ENCODE measurements at regions of chr19 and their contacts with region 1.

Region 1: DNA sequence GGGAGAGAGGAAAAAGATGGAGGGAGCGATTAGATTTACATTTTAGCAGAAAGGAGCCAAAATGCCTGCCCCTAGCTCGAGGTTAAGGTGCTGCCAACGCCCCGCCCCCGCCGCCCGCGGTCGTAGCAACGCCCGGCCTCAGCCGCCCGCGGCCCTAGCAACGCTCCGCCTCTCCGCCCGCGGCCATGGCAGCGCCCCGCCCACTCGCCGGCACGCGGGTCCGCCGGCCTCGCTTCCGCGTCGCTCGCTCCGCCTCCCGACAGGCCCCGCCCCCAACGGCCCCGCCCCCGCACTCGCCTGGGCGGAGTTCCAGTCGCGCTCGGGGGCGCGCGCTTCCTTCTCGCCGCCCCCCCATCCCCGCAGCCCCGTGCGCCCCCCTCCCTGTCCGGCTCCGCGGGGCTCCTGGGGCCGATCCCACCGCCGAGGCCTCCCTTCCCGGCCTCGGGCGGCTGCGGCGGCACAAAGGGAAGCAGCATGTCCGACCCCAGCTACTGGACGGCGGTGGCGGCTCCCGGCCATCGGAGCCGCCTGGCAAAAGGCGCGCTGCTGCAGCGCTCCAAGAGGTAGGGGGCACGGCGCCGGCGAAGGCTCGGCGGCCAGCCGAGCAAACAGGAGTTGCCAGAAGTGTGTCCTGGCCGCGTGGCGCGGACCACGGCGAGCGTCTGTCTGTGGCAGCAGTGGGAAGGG is 20.3 kb downstream of the MAST3 start:
- DNase-seq: peak; percentile 94
- H3K4me3 Mint-ChIP-seq: peak overlapping the region; percentile 73
- H3K27ac Mint-ChIP-seq: peak overlapping the region; percentile 37
- H3K4me1 Mint-ChIP-seq: peaks cover 32% of the 10 kb centered on the region
- H3K27me3 Mint-ChIP-seq: no peaks in the 10 kb centered on the region

Region 2: GRCh38 chr19:17993076-17993813 is 124.6 kb before region 1 on chr19:
- CTCF ChIA-PET with region 1: no interaction called
- intact Hi-C with region 1: no loop called
- DNase-seq: no peak
- H3K4me3 Mint-ChIP-seq: no peak overlapping the region
- H3K27ac Mint-ChIP-seq: no peak overlapping the region
- H3K4me1 Mint-ChIP-seq: peaks cover 3% of the 10 kb centered on the region
- H3K27me3 Mint-ChIP-seq: no peaks in the 10 kb centered on the region

Region 3: DNA sequence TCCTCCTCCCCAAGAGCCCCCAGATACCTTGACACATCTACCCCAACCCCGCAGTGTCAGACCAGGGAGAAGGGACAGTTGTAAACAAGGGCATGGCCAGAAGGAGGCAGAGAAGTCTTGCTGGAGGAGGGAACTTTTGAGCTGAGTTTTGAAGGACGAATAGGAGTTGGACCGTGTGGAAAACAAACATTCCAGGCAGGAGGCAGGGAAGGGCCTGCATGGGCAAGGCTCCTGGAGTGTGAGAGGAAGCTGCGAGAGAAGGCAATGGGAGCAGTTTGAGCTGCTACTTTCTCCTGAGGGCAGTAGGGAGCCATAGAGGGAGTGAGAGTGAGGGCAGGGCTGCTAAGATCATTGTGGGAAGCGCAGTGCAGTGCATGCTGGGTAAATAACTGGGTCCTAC is 54.4 kb before region 1 on chr19:
- CTCF ChIA-PET with region 1: interaction called, 4 read pairs
- intact Hi-C with region 1: loop called (anchors 1 kb)
- DNase-seq: peak; percentile 69
- H3K4me3 Mint-ChIP-seq: no peak overlapping the region
- H3K27ac Mint-ChIP-seq: no peak overlapping the region
- H3K4me1 Mint-ChIP-seq: peaks cover 1% of the 10 kb centered on the region
- H3K27me3 Mint-ChIP-seq: no peaks in the 10 kb centered on the region

Region 4: GRCh38 chr19:18102916-18103542 is 14.8 kb before region 1 on chr19:
- CTCF ChIA-PET with region 1: interaction called, 19 read pairs
- intact Hi-C with region 1: no loop called
- DNase-seq: no peak
- H3K4me3 Mint-ChIP-seq: no peak overlapping the region
- H3K27ac Mint-ChIP-seq: no peak overlapping the region
- H3K4me1 Mint-ChIP-seq: peaks cover 30% of the 10 kb centered on the region
- H3K27me3 Mint-ChIP-seq: no peaks in the 10 kb centered on the region

Region 5: DNA sequence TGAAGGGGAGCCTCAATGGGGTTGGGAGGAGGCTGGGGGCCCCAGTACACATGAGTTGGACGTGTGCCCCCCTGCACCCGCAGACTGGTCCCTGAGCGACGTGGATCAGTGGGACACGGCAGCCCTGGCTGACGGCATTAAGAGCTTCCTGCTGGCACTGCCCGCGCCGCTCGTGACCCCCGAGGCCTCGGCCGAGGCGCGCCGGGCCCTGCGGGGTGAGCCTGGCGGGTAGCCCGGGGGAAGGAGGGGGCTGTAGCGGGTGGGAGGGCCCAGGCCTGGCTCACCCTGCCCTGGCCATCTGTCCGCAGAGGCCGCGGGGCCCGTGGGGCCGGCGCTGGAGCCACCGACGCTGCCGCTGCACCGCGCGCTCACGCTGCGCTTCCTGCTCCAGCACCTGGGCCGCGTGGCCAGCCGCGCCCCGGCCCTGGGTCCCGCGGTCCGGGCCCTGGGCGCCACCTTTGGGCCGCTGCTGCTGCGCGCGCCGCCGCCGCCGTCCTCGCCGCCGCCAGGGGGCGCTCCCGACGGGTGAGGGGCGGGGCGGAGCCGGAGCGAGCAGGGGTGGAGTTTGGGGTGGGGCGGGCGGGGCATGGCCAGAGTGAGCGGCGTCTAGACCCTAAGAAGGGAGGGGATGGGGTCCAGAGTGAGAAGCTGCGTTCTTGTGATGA is 43.3 kb after region 1 on chr19:
- CTCF ChIA-PET with region 1: interaction called, 35 read pairs
- intact Hi-C with region 1: no loop called
- DNase-seq: peak; percentile 77
- H3K4me3 Mint-ChIP-seq: peak overlapping the region; percentile 76
- H3K27ac Mint-ChIP-seq: no peak overlapping the region
- H3K4me1 Mint-ChIP-seq: peaks cover 10% of the 10 kb centered on the region
- H3K27me3 Mint-ChIP-seq: no peaks in the 10 kb centered on the region

Region 6: DNA sequence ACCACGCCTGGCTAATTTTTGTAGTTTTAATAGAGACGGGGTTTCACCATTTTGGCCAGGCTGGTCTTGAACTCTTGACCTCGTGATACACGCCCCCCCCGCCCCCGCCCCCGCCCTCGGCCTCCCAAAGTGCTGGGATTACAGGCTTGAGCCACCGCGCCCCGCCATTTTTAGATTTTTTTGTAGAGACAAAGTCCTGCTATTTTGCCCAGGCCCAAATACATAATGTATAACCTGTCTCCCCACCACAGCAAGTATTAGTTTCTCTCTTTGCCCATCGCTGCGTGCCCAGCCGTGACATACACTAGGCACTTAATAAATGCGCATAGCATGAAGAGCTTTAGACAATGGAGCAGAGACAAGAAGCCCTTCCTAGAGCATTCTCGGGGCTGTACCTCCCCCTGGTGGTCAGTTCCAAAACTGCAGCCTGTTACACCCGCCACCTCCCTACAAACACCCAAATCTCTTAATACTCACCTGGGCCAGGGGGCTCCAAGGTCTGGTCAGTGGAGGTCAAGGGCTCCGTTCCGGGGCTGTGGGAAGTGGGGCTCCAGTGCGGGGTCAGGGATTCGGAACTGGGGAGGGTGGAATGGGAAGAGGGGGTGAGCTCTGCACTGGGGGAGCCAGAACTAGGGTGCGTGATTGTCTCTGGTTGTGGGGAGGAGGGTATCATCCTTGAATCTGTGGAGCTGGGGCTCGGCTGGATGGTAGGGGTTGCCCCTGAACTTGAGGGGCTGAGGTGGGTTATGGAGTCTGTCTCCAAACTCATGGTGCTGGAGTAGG is 133.9 kb after region 1 on chr19:
- CTCF ChIA-PET with region 1: interaction called, 7 read pairs
- intact Hi-C with region 1: loop called (anchors 1 kb)
- DNase-seq: peak; percentile 90
- H3K4me3 Mint-ChIP-seq: no peak overlapping the region
- H3K27ac Mint-ChIP-seq: no peak overlapping the region
- H3K4me1 Mint-ChIP-seq: peaks cover 2% of the 10 kb centered on the region
- H3K27me3 Mint-ChIP-seq: peaks cover 23% of the 10 kb centered on the region

Measured in activated naive CD4-positive, alpha-beta T cell treated with anti-CD3 and anti-CD28 coated beads for 36 hours (primary cell).